Endothelial cell of umbilical vein (primary cell): ENCODE measurements at regions of chr2 and their contacts with region 1.

Region 1: GRCh38 chr2:156480376-156480775 is 44.2 kb downstream of the GPD2 start:
- DNase-seq: no peak
- H3K4me3 ChIP-seq: no peak overlapping the region
- H3K27ac ChIP-seq: no peak overlapping the region
- H3K4me1 ChIP-seq: no peaks in the 10 kb centered on the region
- H3K27me3 ChIP-seq: no peaks in the 10 kb centered on the region
- CTCF ChIP-seq: no peak
- POLR2A ChIP-seq: no peak

Region 2: DNA sequence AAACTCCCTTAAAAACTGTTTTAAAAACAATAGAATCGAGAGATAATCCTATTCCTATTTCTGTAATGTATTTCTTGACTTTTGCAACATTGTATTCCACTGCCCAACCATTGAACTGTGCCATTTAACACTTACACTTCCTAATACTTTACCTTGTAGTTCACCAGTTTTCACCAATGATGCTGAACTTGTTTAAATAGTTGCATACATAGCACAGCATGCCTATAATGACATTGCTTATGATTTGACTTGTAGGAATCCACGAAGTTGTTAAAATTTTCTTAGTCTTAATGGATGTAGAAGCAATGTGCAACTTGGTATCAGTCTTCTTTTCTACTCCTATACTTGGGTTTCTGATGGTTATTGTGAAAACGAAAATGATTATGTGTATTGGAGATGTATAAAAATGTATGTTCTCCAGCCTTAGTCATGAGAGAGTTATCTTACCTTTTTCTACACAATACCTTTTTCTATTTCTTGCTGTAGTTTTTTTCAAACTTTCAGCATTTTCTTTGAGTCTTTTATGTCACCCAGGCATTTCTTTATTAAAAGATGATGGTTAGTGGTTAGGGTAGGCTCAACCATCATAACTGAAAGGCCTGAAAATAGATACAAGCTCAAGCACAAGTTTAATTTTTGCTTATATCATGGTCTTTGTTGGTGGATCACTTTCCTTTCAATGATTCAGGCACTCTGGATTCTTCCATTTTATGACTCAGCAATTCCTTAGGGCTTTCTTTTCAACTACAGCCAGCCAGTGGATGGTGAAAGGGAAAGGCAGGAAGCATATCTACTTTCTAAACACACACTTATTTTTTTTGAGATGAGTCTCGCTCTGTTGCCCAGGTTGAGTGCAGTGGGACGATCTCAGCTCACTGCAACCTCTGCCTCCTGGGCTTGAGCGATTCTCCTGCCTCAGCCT is 34.8 kb before region 1 on chr2:
- CTCF ChIA-PET with region 1: no interaction called
- POLR2A ChIA-PET with region 1: no interaction called
- dilution Hi-C with region 1: no loop called
- intact Hi-C with region 1: no loop called
- DNase-seq: peak; percentile 69
- H3K4me3 ChIP-seq: no peak overlapping the region
- H3K27ac ChIP-seq: no peak overlapping the region
- H3K4me1 ChIP-seq: peaks cover 6% of the 10 kb centered on the region
- H3K27me3 ChIP-seq: no peaks in the 10 kb centered on the region
- CTCF ChIP-seq: no peak
- POLR2A ChIP-seq: no peak

Region 3: GRCh38 chr2:156456616-156457015 is 23.8 kb before region 1 on chr2:
- CTCF ChIA-PET with region 1: no interaction called
- POLR2A ChIA-PET with region 1: no interaction called
- dilution Hi-C with region 1: no loop called
- intact Hi-C with region 1: loop called (anchors 1 kb)
- DNase-seq: no peak
- H3K4me3 ChIP-seq: no peak overlapping the region
- H3K27ac ChIP-seq: no peak overlapping the region
- H3K4me1 ChIP-seq: no peaks in the 10 kb centered on the region
- H3K27me3 ChIP-seq: no peaks in the 10 kb centered on the region
- CTCF ChIP-seq: no peak
- POLR2A ChIP-seq: no peak

Region 4: DNA sequence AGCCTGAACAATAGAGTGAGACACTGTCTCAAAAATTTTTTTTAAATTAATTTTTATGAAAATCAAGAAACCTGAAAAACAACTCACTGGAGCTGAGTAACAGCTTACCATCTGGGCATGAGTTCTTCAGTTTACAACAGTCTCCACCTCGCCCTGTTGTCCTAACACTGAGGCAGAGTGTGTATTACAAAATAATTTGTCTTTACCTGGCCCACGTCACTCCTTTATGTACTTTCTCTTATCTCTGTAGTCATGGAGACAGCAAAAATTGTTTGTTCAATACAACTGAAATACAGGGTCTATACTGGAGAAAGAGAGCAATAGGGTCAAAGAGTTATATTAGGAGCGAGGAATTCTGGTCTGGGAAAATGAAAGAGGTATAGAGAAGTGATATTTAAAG is 915.4 kb after region 1 on chr2:
- CTCF ChIA-PET with region 1: no interaction called
- POLR2A ChIA-PET with region 1: no interaction called
- dilution Hi-C with region 1: no loop called
- intact Hi-C with region 1: no loop called
- DNase-seq: no peak
- H3K4me3 ChIP-seq: no peak overlapping the region
- H3K27ac ChIP-seq: no peak overlapping the region
- H3K4me1 ChIP-seq: no peaks in the 10 kb centered on the region
- H3K27me3 ChIP-seq: no peaks in the 10 kb centered on the region
- CTCF ChIP-seq: no peak
- POLR2A ChIP-seq: no peak